OCI-LY7 (cell line): ENCODE measurements at regions of chr20 and their contacts with region 1.

Region 1: DNA sequence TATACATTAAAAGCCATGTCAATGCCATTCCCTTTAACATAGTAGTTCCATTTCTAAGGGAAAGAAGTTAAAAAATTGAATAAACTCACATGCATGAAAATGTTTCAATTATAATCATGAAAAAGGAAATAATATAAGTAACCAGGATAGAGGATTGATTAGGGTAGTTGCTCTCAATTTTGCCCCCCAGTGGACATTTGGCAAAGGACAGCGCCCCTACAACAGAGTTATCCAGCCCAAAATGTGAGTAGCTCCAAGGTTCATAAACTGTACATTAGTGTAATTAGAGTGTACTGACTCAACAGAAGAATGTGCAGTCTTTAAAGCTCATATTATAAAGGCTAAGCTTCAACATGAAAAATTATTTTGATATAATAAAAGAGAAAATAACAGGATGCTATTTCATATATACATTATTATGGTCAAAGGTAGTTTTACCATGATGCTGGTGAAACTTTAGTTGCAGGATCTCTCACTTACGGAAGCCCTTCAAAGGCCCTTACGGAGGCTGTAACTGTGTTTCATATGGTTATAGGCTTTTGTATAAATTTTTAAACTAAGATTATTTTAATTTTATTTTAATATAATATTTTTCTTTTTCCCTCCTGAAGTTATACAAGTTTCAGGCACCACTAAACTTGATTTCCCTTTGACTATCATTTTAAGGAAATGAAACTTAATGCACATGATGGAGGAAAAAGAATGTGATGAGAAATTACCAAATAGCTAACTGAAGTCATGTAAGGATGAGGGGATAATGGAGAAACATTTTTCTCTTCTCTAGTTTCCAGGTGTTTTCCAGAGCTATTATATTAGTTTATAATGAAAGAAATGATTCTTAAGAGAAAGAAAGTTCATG is 403.6 kb downstream of the PLCB1 start:
- DNase-seq: peak; percentile 69
- H3K4me3 ChIP-seq: peak overlapping the region; percentile 72
- H3K27ac ChIP-seq: peak overlapping the region; percentile 93
- H3K4me1 ChIP-seq: peaks cover 89% of the 10 kb centered on the region
- CTCF ChIP-seq: peak; percentile 95

Region 2: DNA sequence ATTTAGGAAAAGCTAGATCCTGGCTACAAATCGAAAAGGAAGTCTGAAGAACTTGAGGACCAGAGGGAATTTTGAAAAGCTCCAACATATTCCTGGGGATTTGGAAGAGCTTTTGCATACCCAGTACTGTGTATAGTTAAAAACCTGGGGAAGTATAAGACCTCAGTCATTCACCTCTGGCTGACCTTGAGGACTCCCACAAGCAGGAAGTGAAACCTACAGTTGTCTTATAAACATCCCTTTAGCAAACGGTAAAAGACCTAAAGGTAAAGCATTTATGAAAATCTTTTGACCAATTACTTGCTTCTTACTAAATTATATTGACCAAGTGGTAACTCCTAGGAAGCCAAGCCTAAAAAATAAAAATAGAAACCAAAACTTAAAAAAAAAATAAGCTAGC is 770.4 kb before region 1 on chr20:
- CTCF ChIA-PET with region 1: no interaction called
- POLR2A ChIA-PET with region 1: interaction called, 3 read pairs
- intact Hi-C with region 1: loop called (anchors 10 kb)
- DNase-seq: peak; percentile 90
- H3K4me3 ChIP-seq: peak overlapping the region; percentile 26
- H3K27ac ChIP-seq: peak overlapping the region; percentile 82
- H3K4me1 ChIP-seq: peaks cover 60% of the 10 kb centered on the region
- CTCF ChIP-seq: no peak

Region 3: DNA sequence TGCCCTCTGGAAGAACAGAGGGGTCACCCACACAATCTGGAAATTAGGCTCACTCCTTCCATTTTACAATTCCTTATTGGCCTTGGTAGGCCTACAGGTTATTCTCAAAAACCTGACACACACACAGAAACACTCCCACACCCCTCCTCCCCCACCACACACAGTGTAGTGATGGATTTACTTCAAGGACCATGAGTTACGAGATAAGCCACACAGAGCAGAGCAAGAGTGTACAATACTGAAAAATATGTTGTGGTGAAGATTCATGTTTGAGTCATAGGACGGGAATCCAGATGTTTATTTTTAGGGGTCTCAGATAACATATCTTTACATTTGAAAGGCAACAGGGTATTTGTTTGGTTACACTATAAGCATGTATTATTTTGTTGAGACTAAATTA is 111.6 kb before region 1 on chr20:
- CTCF ChIA-PET with region 1: no interaction called
- POLR2A ChIA-PET with region 1: interaction called, 3 read pairs
- intact Hi-C with region 1: loop called (anchors 5 kb)
- DNase-seq: no peak
- H3K4me3 ChIP-seq: no peak overlapping the region
- H3K27ac ChIP-seq: peak overlapping the region; percentile 30
- H3K4me1 ChIP-seq: peaks cover 76% of the 10 kb centered on the region
- CTCF ChIP-seq: no peak

Region 4: GRCh38 chr20:10469599-10469998 is 1934.0 kb after region 1 on chr20:
- CTCF ChIA-PET with region 1: no interaction called
- POLR2A ChIA-PET with region 1: no interaction called
- intact Hi-C with region 1: no loop called
- DNase-seq: peak; percentile 12
- H3K4me3 ChIP-seq: no peak overlapping the region
- H3K27ac ChIP-seq: no peak overlapping the region
- H3K4me1 ChIP-seq: no peaks in the 10 kb centered on the region
- CTCF ChIP-seq: peak; percentile 69